ENCODE measurements at regions of chr5 and their contacts with region 1.

Region 1: DNA sequence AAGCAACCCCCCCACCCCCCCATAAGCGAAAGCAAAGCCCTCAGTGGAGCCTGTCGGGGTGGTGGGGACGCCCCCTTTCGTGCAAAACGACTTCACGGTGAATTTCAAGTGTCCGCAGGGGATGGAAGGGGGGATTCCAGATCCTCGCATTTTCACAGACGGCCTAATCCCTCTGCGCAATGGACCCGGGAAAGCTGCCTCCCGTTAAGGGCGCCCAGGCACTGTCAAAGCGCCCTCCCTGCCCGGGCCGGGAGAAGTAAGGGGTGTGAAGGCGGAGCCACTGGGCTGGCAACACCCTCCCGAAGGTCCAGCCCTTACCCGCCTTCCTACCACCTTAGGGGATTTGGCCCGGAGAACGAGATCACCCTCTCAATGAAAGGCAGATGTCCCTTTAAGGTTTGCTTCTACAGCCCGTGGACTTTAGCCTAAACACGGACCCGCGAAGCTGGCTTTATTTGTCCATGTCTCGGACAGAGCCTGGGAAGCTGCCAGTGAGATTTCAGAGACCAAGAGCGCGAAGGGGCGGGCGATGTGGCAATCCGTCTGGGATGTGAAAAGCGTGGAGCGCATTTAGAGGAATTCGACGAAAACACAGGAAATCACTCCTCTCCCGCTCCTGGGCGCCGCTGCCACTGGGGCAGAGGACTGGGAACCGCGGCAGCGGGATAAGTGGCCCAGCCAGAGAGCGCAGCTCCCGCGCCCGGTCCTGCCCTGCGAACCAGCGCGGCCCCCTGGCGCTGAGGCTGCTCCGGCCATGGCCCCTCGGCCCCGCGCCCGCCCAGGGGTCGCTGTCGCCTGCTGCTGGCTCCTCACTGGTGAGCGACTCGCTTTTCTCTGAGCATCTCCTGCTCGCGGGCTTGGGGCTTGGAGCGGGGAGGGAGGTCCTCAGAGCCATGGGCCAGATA is at the starts of genes ITGA1 and PELO:
- DNase-seq: peak; percentile 51 to 85
- H3K4me3 ChIP-seq: peak within 1 kb of the TSS; percentile 70 to 96 (median 80)
- H3K27ac ChIP-seq: no peak within 1 kb of the TSS
- H3K4me1 ChIP-seq: peaks cover 0 to 2% (median 0%) of the 10 kb centered on the region in 4 experiments; a peak in 1 of 7 replicates
- H3K27me3 ChIP-seq: no peaks in the 10 kb centered on the region
- CTCF ChIP-seq: peak; percentile 31 to 42 (median 42)
- EP300 ChIP-seq: no peak
- POLR2A ChIP-seq: peak in 1 of 2 experiments; percentile 72; a peak in 1 of 3 replicates
- RAD21 ChIP-seq: peak; percentile 44 to 48
- total RNA-seq, gene ITGA1: 6.6 and 9.0 TPM in 2 replicates
- total RNA-seq, gene PELO: 17.0 and 18.5 TPM in 2 replicates

Region 2: DNA sequence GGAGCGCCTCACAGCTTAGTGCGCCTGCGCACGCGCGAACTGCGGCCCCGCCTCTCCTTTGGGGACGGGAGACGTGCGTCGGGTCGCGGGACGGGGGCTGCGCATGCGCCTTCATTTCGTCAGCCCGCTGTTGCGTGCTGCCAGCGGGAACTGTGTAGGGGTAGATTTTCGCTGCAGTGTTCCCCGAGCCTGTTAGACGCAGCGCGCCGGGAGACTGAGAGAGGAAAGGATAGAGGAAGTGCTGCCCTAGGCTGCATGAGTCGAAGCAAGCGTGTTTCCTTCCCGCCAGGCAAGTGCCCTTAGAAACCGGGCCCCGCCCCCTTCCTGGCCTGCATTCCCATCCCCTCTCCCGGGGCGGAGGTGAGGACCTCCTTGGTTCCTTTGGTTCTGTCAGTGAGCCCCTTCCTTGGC is 12.1 kb after region 1 on chr5:
- CTCF ChIA-PET with region 1: interaction called, 39 read pairs
- POLR2A ChIA-PET with region 1: interaction called, 29 read pairs
- DNase-seq: peak; percentile 83 to 94
- H3K4me3 ChIP-seq: peak overlapping the region; percentile 81 to 93 (median 86)
- H3K27ac ChIP-seq: peak overlapping the region; percentile 88
- H3K4me1 ChIP-seq: peaks cover 5 to 11% (median 9%) of the 10 kb centered on the region in 4 experiments; a peak in 5 of 7 replicates
- H3K27me3 ChIP-seq: no peaks in the 10 kb centered on the region
- CTCF ChIP-seq: no peak
- EP300 ChIP-seq: no peak
- POLR2A ChIP-seq: peak; percentile 9 to 31; a peak in 2 of 3 replicates
- RAD21 ChIP-seq: no peak